Activated CD4-positive, alpha-beta memory T cell treated with anti-CD3 and anti-CD28 coated beads, Interleukin-2, amount 10 ng/mL, durations not matched to agents 7 days and 5 days (primary cell): ENCODE measurements at regions of chr2 and their contacts with region 1.

Region 1: DNA sequence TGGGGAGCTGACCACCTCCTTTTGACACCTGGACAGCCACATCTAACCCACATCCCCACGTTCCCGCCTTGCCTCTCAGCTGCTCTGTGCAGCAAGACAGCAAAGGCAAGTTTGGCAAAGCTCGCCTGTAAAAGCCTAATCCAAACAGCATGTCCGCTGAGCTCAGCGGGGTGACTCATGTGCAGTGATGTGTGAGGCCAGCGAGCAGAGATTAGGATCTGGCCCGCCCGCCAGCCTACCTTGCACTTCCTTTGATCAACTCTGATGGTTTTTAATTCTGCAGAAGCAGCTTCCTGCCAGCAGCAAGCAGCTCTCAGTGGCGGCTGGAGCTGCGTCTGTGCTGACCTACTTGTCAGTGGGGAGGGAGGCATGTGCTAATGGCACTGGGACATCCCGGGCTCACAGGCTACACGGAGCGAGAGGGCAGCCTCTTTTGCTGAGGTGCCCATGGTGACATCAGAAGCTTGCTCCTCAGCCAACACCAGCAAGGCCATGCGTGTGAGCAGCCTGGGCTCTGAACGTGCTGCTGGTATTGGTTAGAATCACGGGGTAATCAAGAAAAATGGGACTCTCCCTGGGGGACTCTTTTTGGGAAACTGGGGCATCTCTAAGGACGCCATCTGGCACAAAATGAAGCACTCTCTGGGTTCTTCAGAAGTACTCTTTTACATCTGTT is 36.0 kb upstream of the EML4 start:
- DNase-seq: peak; percentile 96
- H3K4me3 Mint-ChIP-seq: peak overlapping the region; percentile 62
- H3K27ac Mint-ChIP-seq: peak overlapping the region; percentile 98
- H3K4me1 Mint-ChIP-seq: peaks cover 88% of the 10 kb centered on the region
- H3K27me3 Mint-ChIP-seq: no peaks in the 10 kb centered on the region

Region 2: DNA sequence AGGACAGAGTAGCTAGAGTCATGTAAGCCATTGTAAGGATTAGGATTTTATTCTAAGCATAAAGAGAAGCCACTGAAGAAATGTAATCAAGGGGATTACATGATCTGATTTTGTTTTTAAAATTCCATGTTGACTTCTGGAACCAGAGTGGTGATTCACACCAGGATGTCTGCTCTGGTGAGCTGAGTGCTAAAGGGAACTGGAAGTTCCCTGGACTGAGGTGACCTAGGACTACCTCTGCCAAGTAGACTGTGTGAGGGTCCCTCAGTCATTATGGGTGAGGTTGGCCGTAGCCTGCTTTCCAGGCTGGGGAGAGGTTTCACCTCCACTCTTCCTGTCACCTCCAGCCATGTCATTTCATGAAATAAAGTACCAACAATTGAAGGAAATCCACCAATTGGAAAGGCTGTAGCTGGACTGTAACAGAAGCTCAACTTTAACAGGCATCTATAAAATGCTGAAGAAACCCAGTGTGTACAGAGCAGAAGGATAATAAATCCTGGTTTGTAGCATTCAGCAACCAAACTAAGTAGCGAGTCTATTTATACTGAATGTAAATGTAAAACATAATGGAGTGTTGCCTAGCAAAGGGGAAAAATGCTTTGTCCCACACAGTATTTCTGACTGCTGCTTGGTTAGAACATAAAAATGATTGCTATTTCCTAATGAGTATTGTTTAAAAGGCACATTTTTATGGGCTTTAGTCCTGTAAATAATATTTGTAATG is 592.7 kb before region 1 on chr2:
- CTCF ChIA-PET with region 1: no interaction called
- POLR2A ChIA-PET with region 1: no interaction called
- DNase-seq: no peak
- H3K4me3 Mint-ChIP-seq: no peak overlapping the region
- H3K27ac Mint-ChIP-seq: no peak overlapping the region
- H3K4me1 Mint-ChIP-seq: no peaks in the 10 kb centered on the region
- H3K27me3 Mint-ChIP-seq: no peaks in the 10 kb centered on the region

Region 3: GRCh38 chr2:42086500-42086953 is 46.6 kb before region 1 on chr2:
- CTCF ChIA-PET with region 1: interaction called, 11 read pairs
- POLR2A ChIA-PET with region 1: interaction called, 3 read pairs
- DNase-seq: peak; percentile 44
- H3K4me3 Mint-ChIP-seq: no peak overlapping the region
- H3K27ac Mint-ChIP-seq: no peak overlapping the region
- H3K4me1 Mint-ChIP-seq: peaks cover 9% of the 10 kb centered on the region
- H3K27me3 Mint-ChIP-seq: peaks cover 23% of the 10 kb centered on the region

Region 4: DNA sequence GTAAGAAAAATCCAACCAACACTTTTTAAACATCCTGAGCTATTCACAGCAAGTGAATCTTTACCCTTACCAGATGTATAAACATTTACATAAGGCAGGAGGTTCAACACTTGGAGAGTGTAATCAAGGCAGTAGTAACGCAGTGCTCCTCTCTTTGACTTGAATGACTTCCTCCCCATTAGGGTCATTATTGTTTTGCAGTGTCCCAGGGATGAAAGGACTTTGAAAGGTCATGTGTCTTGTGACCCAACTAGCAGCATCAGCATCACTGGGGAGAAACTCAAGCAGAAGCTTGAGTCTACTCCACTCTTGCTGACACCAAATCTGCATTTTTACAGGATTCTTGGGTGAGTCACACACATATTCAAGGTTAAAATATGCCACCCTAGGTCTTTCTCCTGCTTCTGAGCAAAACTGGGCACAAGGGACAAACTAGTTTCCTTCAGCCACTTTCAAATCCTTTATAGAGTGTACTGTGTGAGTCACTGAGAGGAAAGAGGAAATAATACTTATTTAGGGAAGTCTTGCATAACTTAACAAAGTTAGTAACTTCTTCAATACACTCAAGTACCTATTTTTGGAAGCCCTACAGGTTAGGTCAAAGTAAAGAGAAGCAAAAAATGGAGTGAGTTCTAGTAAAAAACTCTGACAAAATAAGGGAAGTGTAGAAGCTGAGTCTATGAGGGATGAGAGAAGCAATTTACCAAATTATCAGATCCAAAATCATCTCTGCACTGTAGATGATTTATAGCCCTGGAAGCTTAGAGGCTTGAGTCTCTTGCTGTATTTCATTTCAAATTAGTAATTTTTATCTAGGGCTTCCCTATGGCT is 15.0 kb before region 1 on chr2:
- CTCF ChIA-PET with region 1: interaction called, 12 read pairs
- POLR2A ChIA-PET with region 1: interaction called, 44 read pairs
- DNase-seq: no peak
- H3K4me3 Mint-ChIP-seq: no peak overlapping the region
- H3K27ac Mint-ChIP-seq: peak overlapping the region; percentile 60
- H3K4me1 Mint-ChIP-seq: peaks cover 38% of the 10 kb centered on the region
- H3K27me3 Mint-ChIP-seq: no peaks in the 10 kb centered on the region

Region 5: DNA sequence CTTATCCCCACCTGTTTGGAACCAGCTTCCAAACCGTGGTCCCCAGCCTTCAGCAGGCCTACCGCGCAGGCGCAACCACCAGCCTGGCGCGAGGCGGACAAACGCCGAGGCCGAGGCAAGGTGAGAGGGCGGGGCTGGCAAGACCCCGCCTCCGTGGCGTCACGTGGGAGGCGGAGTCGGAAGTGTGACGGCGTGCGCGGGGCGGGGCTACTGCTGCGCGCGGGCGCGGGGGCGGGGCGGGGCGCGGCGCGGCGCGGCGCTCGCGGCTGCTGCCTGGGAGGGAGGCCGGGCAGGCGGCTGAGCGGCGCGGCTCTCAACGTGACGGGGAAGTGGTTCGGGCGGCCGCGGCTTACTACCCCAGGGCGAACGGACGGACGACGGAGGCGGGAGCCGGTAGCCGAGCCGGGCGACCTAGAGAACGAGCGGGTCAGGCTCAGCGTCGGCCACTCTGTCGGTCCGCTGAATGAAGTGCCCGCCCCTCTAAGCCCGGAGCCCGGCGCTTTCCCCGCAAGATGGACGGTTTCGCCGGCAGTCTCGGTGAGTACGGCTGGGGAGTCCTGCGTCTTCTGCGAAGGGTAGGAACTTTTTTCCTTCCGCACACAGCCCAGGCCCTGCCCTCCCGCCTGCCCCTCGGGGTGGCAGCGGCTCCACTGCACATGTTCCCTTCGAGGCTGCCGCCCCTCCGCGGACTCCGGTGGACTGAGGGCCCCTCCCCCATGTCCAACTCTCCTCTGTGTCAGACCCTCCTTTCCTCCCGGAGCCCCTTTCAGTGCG is 36.2 kb after region 1 on chr2 and contains the start of gene EML4:
- CTCF ChIA-PET with region 1: interaction called, 14 read pairs
- POLR2A ChIA-PET with region 1: interaction called, 71 read pairs
- DNase-seq: peak; percentile 92
- H3K4me3 Mint-ChIP-seq: no peak within 1 kb of the TSS
- H3K27ac Mint-ChIP-seq: peak within 1 kb of the TSS; percentile 63
- H3K4me1 Mint-ChIP-seq: peaks cover 24% of the 10 kb centered on the region
- H3K27me3 Mint-ChIP-seq: peaks cover 7% of the 10 kb centered on the region
- total RNA-seq, gene EML4: 130 to 133 TPM

Region 6: GRCh38 chr2:42360890-42361727 is 228.0 kb after region 1 on chr2 and contains the start of gene COX7A2L:
- CTCF ChIA-PET with region 1: no interaction called
- POLR2A ChIA-PET with region 1: interaction called, 15 read pairs
- DNase-seq: peak; percentile 95
- H3K4me3 Mint-ChIP-seq: peak within 1 kb of the TSS; percentile 82
- H3K27ac Mint-ChIP-seq: peak within 1 kb of the TSS; percentile 85
- H3K4me1 Mint-ChIP-seq: peaks cover 45% of the 10 kb centered on the region
- H3K27me3 Mint-ChIP-seq: peaks cover 6% of the 10 kb centered on the region
- total RNA-seq, gene COX7A2L: 102 TPM